ENCODE measurements at regions of chr9 and their contacts with region 1.

Region 1: DNA sequence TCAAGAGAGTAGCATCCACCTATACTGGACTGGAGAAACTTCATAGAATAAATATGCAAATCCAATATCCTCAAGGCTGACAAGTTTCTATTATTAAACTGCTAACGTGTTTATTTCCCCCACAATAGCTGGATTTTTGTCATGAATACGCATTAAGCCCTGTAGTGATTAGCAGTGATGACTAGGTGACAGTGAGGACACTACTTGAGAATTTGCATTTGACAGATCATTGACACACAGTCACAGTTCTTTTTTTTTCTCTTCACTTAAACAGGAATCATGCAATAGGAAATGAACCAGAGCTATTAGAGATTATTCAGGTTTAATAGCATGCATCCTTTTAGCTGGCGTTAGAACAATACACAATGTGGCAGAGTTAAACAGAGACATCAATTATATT is 35.3 kb downstream of the MPDZ start:
- DNase-seq: no peak
- ATAC-seq: no peak

Region 2: DNA sequence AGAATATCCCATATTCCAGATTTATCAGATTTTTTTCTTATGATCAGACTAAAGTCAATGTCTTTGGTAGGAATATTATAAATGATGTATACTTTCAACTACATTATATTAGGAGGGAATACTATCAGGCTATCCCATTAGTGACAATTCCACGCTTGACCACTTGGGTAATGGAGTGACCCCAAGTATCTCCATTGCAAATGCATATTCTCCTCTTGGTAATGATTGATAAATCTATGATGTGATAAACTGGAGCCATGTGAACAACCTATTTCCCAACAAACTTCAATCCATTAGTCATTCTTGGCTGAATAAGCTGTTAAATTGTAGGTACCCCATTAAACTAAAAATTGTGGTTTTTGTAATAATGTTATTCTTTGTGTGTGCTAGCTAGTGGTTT is 47.5 kb after region 1 on chr9:
- intact Hi-C with region 1: loop called (anchors 10 kb)
- DNase-seq: no peak
- ATAC-seq: no peak

Region 3: GRCh38 chr9:13705918-13706317 is 461.7 kb after region 1 on chr9:
- intact Hi-C with region 1: no loop called
- DNase-seq: peak; percentile 44
- ATAC-seq: peak; percentile 94